Heart left ventricle (tissue), 16 donors: ENCODE measurements at regions of chr14 and their contacts with region 1.

Region 1: GRCh38 chr14:31937721-31938346 is 139.3 kb upstream of the ARHGAP5 start:
- DNase-seq: peak; percentile 46 to 77 (median 60)
- ATAC-seq: peak; percentile 65 to 93 (median 88)
- H3K4me3 ChIP-seq: no peak overlapping the region
- H3K27ac ChIP-seq: no peak overlapping the region
- H3K4me1 ChIP-seq: peaks cover 0 to 30% (median 14%) of the 10 kb centered on the region in 12 donors
- H3K27me3 ChIP-seq: no peaks in the 10 kb centered on the region
- CTCF ChIP-seq: no peak
- POLR2A ChIP-seq: no peak

Region 2: DNA sequence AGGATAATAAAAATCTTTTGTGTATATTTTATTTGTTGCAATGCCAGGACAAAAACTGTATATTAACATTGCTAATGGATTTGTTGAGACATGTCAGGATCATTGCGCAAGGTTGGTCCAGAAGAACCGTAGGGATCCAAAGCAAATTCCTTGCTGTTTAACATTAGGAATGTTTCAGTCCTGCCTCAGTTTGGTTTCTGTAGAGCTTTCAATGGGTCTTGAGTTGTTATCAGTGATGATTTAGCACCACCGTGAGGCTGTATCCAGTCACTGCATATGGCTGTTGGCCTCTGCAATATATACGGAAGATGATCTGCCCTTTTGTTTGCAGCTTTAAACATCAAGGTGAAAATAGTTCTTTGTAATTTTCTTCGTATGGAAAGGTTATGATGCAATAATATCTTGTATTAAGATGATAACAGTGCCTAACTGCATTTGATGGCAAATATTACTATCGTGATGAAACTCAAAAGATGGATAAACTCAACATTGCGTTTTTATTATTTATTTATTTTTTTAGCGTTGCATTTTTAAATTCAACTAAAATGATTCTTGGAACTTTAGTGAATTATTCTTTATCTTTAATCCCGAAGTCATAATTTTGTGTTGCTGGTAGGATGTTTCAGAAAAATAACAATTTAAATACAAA is 622.5 kb after region 1 on chr14:
- intact Hi-C with region 1: loop called in 2 of 10 experiments (anchors 5 to 10 kb)
- DNase-seq: peak in 3 of 5 donors; percentile 29 to 42 (median 39)
- ATAC-seq: peak; percentile 46 to 83 (median 73)
- H3K4me3 ChIP-seq: no peak overlapping the region
- H3K27ac ChIP-seq: peak overlapping the region in 10 of 12 donors; percentile 9 to 71 (median 44)
- H3K4me1 ChIP-seq: peaks cover 0 to 54% (median 21%) of the 10 kb centered on the region in 12 donors
- H3K27me3 ChIP-seq: no peaks in the 10 kb centered on the region
- CTCF ChIP-seq: peak; percentile 67 to 92 (median 80)
- POLR2A ChIP-seq: no peak